Adrenal gland (tissue), 19 donors: ENCODE measurements at regions of chr18 and their contacts with region 1.

Region 1: GRCh38 chr18:62714671-62715435 is 488 bp upstream of the PHLPP1 start:
- DNase-seq: peak; percentile 100
- H3K4me3 ChIP-seq: peak overlapping the region in 2 of 4 donors; percentile 54 to 93
- H3K27ac ChIP-seq: peak overlapping the region in 4 of 5 donors; percentile 89 to 94 (median 92)
- H3K4me1 ChIP-seq: peaks cover 0 to 19% of the 10 kb centered on the region in 2 donors
- H3K27me3 ChIP-seq: no peaks in the 10 kb centered on the region
- CTCF ChIP-seq: peak; percentile 52 to 87 (median 80)
- POLR2A ChIP-seq: no peak

Region 2: GRCh38 chr18:62850619-62851309 is 135.9 kb after region 1 on chr18:
- intact Hi-C with region 1: loop called in 1 of 2 experiments (anchors 10 kb)
- DNase-seq: no peak
- H3K4me3 ChIP-seq: no peak overlapping the region
- H3K27ac ChIP-seq: no peak overlapping the region
- H3K4me1 ChIP-seq: peaks cover 0 to 7% of the 10 kb centered on the region in 2 donors
- H3K27me3 ChIP-seq: no peaks in the 10 kb centered on the region
- CTCF ChIP-seq: no peak
- POLR2A ChIP-seq: no peak

Region 3: DNA sequence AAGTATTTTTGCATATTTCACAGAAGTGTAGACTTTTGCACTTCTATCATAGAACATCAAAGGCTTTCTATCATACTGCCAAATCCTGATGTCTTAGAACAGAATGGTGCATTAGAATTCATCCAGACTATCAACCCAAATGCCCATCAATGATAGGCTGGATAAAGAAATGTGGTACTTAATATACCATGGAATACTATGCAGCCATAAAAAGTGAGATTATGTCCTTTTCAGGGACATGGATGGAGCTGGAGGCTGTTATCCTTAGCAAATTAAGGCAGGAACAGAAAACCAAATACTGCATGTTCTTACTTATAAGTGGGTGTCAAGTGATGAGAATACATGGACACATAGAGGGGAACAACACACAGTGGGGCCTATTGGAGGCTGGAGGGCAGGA is 150.6 kb after region 1 on chr18:
- intact Hi-C with region 1: no loop called
- DNase-seq: no peak
- H3K4me3 ChIP-seq: no peak overlapping the region
- H3K27ac ChIP-seq: no peak overlapping the region
- H3K4me1 ChIP-seq: peaks cover 0 to 20% of the 10 kb centered on the region in 2 donors
- H3K27me3 ChIP-seq: no peaks in the 10 kb centered on the region
- CTCF ChIP-seq: no peak
- POLR2A ChIP-seq: no peak

Region 4: DNA sequence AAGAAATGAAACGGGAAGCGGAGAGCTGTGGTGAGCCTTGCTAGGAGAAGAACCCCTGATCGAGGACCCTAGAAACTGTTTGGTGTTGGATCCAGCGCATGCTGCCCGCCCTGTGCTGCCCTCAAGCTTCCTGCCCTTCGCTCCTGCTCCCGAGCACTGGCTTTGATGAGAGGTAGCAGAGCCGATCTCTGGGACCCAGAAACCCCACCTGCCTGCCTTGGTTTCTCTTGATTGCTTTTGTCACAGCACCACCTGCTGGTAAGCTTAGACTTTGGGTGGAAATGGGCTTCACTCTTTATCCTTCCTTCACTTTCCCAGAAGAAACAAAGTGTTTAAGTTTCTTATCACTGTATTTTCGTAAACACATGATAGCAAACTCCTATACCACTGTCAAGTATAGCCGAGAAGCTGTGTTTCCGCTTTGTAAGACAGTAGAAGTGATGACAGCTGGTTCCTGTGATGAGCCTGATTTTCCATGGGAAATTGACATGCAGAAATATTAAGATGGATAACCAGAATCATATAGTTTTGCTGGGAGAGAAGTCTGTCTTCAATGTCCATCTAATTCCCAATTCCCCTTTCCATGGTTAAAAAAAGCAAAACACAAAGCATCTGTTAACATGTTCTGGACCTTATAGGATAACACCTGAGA is 267.9 kb after region 1 on chr18:
- intact Hi-C with region 1: loop called (anchors 5 kb)
- DNase-seq: peak; percentile 56 to 82 (median 66)
- H3K4me3 ChIP-seq: peak overlapping the region in 1 of 4 donors; percentile 34
- H3K27ac ChIP-seq: no peak overlapping the region
- H3K4me1 ChIP-seq: peaks cover 3 to 7% of the 10 kb centered on the region in 2 donors
- H3K27me3 ChIP-seq: no peaks in the 10 kb centered on the region
- CTCF ChIP-seq: peak; percentile 58 to 82 (median 78)
- POLR2A ChIP-seq: no peak

Region 5: DNA sequence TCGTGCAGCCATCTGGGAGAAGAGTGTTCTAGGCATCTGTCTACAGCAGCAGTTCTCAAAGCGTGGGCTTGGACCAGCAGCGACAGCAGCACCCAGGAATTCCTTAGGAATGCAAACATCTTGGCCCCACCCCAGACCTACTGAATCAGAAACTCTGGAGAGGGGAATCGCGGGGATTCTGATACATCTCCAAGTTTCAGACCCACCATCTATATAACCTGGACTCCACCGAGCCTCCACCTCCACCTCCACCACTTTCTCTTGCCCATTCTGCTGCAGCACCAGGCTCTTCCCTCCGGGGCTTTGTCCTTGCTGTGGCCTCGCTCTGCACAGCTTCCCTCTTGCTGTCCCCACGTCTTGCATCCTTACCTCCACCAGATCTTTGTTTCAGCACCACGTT is 348.3 kb after region 1 on chr18:
- intact Hi-C with region 1: no loop called
- DNase-seq: no peak
- H3K4me3 ChIP-seq: no peak overlapping the region
- H3K27ac ChIP-seq: no peak overlapping the region
- H3K4me1 ChIP-seq: no peaks in the 10 kb centered on the region
- H3K27me3 ChIP-seq: no peaks in the 10 kb centered on the region
- CTCF ChIP-seq: no peak
- POLR2A ChIP-seq: no peak

Region 6: DNA sequence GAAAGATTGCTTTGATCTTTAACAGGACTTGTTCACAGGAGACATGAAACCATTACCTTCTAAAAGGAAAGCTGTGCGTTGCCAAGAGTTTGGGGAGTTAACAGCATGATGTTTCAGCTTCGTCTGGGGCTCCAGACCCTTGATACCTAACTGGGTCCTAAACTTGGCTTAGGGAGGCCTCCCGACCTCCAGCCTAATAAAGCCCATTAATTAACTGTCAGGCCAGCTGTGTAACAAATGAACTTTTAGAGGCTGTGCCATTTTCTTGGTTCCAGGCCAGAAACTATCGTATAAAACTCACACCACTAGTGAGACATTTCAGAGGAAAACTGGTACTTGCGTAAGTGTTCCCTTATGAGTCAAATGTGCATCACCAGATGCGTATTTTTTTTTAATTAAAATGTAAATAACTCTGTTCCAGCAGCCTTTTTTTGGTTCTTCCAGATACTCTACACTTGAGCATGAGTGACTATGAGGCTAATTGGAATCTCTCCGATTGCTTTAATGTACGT is 368.2 kb after region 1 on chr18:
- intact Hi-C with region 1: no loop called
- DNase-seq: peak in 1 of 7 donors; percentile 38
- H3K4me3 ChIP-seq: no peak overlapping the region
- H3K27ac ChIP-seq: no peak overlapping the region
- H3K4me1 ChIP-seq: no peaks in the 10 kb centered on the region
- H3K27me3 ChIP-seq: no peaks in the 10 kb centered on the region
- CTCF ChIP-seq: no peak
- POLR2A ChIP-seq: no peak

Region 7: DNA sequence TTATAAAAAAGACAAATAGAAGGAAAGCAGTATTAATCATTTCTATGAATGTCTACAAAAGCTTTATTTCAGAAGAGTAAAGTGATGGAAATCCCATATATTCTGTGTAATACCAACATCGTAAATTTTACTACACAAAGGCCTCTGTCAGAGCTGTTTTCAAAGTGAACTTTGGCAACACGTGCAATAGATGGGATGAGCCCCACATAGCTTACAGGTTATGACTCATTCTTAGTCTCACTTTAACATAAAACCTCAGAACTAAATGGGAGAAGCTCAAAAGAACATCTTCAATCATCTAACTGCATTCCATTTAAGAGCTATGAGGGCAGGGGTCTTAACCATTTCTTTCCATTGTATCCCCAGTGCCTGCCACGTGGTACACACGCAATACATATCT is 695.9 kb after region 1 on chr18:
- intact Hi-C with region 1: loop called in 1 of 2 experiments (anchors 10 kb)
- DNase-seq: no peak
- H3K4me3 ChIP-seq: no peak overlapping the region
- H3K27ac ChIP-seq: no peak overlapping the region
- H3K4me1 ChIP-seq: peaks cover 0 to 7% of the 10 kb centered on the region in 2 donors
- H3K27me3 ChIP-seq: no peaks in the 10 kb centered on the region
- CTCF ChIP-seq: no peak
- POLR2A ChIP-seq: no peak